Pancreas (tissue), 10 donors: ENCODE measurements at regions of chr9 and their contacts with region 1.

Region 1: DNA sequence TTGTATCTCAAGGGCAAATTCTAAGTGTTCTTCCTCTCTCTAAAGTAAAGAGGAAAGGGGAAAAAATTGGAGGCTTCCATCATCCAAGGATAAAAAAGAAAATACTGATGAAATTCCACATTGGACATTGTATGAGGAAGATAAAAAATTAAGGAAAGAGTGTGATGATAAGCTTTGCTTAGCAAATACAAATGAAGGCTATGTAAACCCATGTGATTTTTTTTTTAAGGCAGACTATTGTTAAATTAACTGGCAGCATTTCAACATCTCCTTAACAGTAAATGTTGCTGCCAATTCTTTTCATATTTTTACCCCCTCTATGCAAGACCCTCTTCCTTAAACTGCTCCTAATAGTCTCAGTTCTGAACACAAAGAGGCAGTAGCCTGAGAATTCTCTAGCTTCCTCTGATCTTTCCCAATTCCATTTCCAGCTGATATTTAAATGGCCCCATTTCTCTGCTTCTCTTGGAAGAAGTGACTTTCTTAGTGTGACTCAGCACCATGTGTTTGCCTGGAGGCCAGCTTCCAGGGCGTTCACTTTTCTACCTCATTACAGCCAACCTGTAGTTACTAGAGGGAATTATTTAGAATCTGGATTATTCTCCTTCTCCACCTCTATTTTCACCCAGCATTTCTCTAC is 159.7 kb downstream of the TLE1 start:
- DNase-seq: peak in 4 of 6 donors; percentile 25 to 49 (median 33)
- ATAC-seq: peak; percentile 87 to 96 (median 92)
- H3K4me3 ChIP-seq: no peak overlapping the region
- H3K27ac ChIP-seq: peak overlapping the region in 2 of 4 donors; percentile 20 to 47
- H3K4me1 ChIP-seq: peaks cover 0 to 10% (median 10%) of the 10 kb centered on the region in 3 donors
- H3K27me3 ChIP-seq: no peaks in the 10 kb centered on the region
- CTCF ChIP-seq: no peak

Region 2: GRCh38 chr9:81689343-81690190 is 159.9 kb after region 1 on chr9 and contains the start of gene TLE1:
- intact Hi-C with region 1: loop called in 1 of 3 experiments (anchors 10 kb)
- DNase-seq: peak; percentile 100
- ATAC-seq: peak; percentile 83 to 91 (median 86)
- H3K4me3 ChIP-seq: peak within 1 kb of the TSS; percentile 62 to 88 (median 82)
- H3K27ac ChIP-seq: peak within 1 kb of the TSS; percentile 78 to 91 (median 84)
- H3K4me1 ChIP-seq: peaks cover 13 to 26% (median 19%) of the 10 kb centered on the region in 3 donors
- H3K27me3 ChIP-seq: no peaks in the 10 kb centered on the region
- CTCF ChIP-seq: no peak
- total RNA-seq, gene TLE1: 15.1 to 38.9 (median 26.2) TPM